AG04450 (cell line): ENCODE measurements at regions of chr2 and their contacts with region 1.

Region 1: GRCh38 chr2:166516712-166517303 is 22.8 kb upstream of the SCN7A start:
- DNase-seq: peak; percentile 18
- H3K4me3 ChIP-seq: no peak overlapping the region
- H3K27ac ChIP-seq: no peak overlapping the region
- H3K27me3 ChIP-seq: no peaks in the 10 kb centered on the region
- CTCF ChIP-seq: peak; percentile 84

Region 2: DNA sequence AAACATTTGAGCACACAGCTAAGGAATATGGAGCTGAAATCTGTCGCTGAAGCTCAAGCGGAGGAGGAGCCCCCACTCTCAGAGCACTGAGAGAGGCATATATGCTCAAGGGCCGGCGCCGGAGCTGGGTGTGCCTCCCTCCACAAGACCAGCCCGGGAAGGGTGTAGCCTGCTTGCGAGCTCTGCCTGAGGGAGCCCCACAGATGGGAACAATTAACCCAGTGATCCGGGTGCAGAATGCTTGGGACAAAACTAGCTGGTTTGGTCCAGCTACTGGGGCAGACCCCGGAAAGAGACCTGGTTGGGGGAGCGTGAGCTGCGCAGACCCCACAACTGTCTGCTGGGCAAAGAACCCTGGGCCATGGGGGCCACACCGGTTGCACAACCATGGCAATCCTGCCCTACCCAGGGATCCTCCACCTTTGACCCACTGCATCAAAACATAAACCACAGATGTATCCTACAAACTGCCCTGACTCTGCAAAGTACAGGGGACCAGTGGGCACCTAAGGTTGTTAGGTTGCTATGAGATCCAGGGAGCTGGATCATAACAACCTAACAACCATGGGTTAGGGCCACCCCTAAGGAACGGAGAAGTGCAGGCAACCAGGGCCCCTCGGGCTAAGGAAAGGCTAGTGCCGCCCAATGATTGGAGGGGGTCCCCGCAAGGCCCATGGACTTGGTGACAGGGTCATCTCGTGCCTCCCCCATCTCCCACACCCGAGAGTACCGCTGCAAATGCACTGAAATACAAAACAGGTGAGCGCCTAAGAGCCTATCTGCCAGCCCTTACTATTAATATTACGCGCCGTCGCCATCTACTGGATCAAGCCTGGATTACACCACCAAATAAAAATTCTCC is 335.6 kb before region 1 on chr2:
- CTCF ChIA-PET with region 1: interaction called, 76 read pairs
- POLR2A ChIA-PET with region 1: no interaction called
- DNase-seq: no peak
- H3K4me3 ChIP-seq: no peak overlapping the region
- H3K27ac ChIP-seq: no peak overlapping the region
- H3K27me3 ChIP-seq: no peaks in the 10 kb centered on the region
- CTCF ChIP-seq: peak; percentile 61

Region 3: DNA sequence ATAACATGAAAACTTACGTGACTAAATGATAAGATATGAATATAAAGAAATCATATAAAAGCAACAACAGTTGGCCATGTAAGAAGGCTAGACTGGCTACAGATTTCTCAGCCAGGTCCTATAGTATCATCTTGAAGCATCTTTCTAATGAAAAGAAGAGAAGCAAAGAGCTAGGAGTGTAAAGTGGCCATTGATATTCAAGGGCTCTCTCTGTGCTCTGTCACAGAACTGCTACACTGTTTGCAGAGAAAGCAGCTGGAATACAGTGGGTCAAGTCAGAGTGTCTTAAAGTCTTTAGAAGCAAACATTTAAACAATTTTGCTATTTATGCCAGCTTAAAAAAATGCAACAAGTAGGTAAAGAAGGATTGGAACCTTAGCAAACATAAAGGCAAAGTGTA is 259.9 kb before region 1 on chr2:
- CTCF ChIA-PET with region 1: no interaction called
- POLR2A ChIA-PET with region 1: no interaction called
- DNase-seq: no peak
- H3K4me3 ChIP-seq: no peak overlapping the region
- H3K27ac ChIP-seq: no peak overlapping the region
- H3K27me3 ChIP-seq: no peaks in the 10 kb centered on the region
- CTCF ChIP-seq: no peak

Region 4: DNA sequence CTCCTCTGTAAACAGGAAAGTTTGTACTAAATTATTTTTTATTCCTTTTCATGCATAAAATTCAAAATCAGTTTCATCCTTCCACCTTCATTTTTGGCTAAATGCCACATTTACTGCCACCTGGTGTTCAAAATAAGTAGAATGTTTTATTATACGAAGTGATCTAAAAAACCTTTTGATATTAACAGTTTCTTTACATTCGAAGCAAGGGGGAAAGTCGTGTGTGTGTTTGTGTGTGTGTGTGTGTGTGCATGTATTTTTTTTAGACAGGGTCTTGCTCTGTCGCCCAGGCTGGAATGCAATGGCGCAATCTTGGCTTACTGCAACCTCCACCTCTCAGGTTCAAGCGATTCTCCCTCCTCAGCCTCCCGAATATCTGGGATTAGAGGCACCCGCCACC is 132.0 kb before region 1 on chr2:
- CTCF ChIA-PET with region 1: interaction called, 10 read pairs
- POLR2A ChIA-PET with region 1: no interaction called
- DNase-seq: no peak
- H3K4me3 ChIP-seq: no peak overlapping the region
- H3K27ac ChIP-seq: no peak overlapping the region
- H3K27me3 ChIP-seq: no peaks in the 10 kb centered on the region
- CTCF ChIP-seq: peak; percentile 50

Region 5: DNA sequence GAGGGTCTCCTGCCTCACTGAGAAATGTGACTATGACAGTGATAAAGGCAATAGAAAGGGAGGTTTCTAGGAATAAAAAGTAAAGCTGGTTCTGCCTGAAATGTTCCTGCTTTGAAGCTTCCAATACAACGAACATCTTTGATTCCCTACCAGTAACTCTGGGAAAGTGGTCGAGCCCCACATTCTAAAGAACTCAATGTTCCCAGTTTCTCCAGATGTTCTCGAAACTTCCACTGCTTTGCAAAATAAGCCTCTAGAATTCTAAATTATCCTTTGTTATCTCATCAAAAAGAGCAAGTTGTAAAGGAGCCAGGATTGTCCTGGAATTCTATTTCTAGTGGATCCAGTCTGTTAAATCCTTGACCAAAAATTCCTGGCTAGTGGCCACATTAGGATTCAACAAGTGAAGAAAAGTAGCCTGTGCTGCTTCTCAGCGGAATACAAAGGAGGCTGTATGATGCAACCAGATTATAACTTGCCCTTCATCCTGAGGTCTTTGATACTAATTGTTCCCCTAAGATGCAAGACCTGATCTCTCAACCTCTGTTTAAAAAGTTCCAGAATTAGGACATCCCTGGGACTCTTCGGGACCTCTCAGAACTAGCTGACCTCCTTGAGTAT is 31.1 kb before region 1 on chr2:
- CTCF ChIA-PET with region 1: interaction called, 10 read pairs
- POLR2A ChIA-PET with region 1: no interaction called
- DNase-seq: no peak
- H3K4me3 ChIP-seq: no peak overlapping the region
- H3K27ac ChIP-seq: no peak overlapping the region
- H3K27me3 ChIP-seq: no peaks in the 10 kb centered on the region
- CTCF ChIP-seq: no peak

Region 6: DNA sequence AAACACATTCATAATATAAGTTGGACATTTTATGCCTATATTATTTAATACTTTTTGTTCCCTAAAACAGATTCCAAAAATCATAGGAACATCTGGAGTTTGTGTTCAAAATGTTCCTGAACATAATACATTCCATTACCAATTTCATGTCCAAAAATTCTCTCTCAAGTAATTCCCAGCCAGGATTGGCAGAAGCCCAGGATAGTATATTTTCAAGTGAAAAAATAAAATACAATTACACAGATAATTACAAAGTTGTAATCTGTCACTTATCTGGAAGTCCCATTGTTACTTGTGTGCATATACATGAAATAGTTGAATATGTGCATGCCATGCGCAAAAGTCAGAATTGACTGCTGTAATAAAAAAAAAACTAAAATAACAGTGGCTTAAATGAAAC is 17.5 kb before region 1 on chr2:
- CTCF ChIA-PET with region 1: interaction called, 19 read pairs
- POLR2A ChIA-PET with region 1: interaction called, 3 read pairs
- DNase-seq: no peak
- H3K4me3 ChIP-seq: no peak overlapping the region
- H3K27ac ChIP-seq: no peak overlapping the region
- H3K27me3 ChIP-seq: no peaks in the 10 kb centered on the region
- CTCF ChIP-seq: no peak